ENCODE measurements at regions of chr6 and their contacts with region 1.

Region 1: GRCh38 chr6:150600301-150601017 is 774 bp downstream of the PLEKHG1 start:
- DNase-seq: peak; percentile 27
- H3K4me3 Mint-ChIP-seq: peak overlapping the region; percentile 83
- H3K27ac Mint-ChIP-seq: peak overlapping the region; percentile 73
- H3K4me1 Mint-ChIP-seq: peaks cover 17% of the 10 kb centered on the region
- H3K27me3 Mint-ChIP-seq: peaks cover 60% of the 10 kb centered on the region

Region 2: DNA sequence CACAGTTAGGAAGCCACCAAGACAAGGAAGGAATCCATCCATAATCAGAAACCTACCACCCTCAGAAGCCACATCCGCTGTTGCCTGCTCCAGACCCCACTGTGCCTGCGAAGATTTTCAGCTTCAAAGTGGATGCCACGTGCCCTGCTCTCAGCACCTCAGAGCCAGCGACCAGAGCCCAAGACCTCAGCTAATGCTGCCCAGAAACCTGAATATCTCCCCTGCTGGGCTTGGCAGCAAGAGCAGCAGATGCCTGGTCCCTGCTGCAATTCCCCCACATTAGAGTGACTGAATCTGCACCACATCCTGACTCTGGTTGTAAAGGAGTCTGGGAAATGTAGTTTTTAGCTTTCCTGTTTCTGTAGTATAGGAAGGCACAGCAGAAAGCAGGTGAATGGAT is 520.9 kb before region 1 on chr6:
- intact Hi-C with region 1: loop called (anchors 2 kb)
- DNase-seq: peak; percentile 12
- H3K4me3 Mint-ChIP-seq: peak overlapping the region; percentile 54
- H3K27ac Mint-ChIP-seq: no peak overlapping the region
- H3K4me1 Mint-ChIP-seq: peaks cover 22% of the 10 kb centered on the region
- H3K27me3 Mint-ChIP-seq: peaks cover 33% of the 10 kb centered on the region

Region 3: GRCh38 chr6:150243620-150244314 is 356.7 kb before region 1 on chr6:
- intact Hi-C with region 1: loop called (anchors 10 kb)
- DNase-seq: no peak
- H3K4me3 Mint-ChIP-seq: no peak overlapping the region
- H3K27ac Mint-ChIP-seq: no peak overlapping the region
- H3K4me1 Mint-ChIP-seq: peaks cover 15% of the 10 kb centered on the region
- H3K27me3 Mint-ChIP-seq: peaks cover 8% of the 10 kb centered on the region

Region 4: DNA sequence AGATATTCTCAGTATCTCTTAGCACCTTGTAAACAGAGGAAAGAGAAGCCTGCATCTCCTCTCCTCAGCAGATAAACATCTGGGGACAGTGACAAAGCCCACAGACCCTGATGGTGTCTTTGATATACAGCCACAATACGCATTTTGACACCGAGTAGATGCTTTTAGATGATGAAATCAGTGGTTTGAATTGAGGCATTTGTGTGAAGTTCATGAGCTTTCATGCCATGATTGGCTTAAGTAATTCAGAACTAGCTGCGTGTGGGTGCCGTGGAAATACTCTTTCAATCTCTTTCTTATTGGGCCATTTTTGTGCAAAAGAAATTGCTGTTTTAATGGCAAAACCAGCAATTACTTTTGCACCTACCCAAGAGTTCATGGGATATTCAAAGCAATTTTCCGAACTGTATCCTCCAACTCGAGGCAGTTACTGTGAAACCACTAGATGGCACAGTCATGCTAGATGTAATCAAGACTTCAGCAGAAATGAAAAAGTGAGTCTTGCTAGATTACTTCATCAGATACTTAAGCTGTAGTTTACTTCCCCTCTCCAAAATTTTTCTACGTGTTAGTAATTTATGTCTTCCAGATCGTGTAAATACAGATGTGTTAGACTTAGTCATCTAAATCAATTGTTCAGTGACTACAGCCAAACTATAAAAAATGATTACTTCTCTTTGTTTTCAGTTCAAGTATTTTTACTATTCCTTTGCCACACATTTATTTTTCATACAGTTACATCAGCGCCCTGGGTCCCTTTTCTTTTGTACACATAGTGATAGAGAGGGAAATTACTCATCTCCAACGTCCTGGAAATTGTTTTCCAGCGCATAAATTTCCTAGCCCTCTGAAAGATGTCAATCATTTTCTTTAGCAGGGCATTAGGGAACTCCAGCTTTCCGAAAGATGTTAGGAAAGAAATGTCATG is 182.3 kb before region 1 on chr6:
- intact Hi-C with region 1: loop called (anchors 1 kb)
- DNase-seq: peak; percentile 6
- H3K4me3 Mint-ChIP-seq: peak overlapping the region; percentile 73
- H3K27ac Mint-ChIP-seq: peak overlapping the region; percentile 45
- H3K4me1 Mint-ChIP-seq: peaks cover 23% of the 10 kb centered on the region
- H3K27me3 Mint-ChIP-seq: peaks cover 36% of the 10 kb centered on the region

Region 5: DNA sequence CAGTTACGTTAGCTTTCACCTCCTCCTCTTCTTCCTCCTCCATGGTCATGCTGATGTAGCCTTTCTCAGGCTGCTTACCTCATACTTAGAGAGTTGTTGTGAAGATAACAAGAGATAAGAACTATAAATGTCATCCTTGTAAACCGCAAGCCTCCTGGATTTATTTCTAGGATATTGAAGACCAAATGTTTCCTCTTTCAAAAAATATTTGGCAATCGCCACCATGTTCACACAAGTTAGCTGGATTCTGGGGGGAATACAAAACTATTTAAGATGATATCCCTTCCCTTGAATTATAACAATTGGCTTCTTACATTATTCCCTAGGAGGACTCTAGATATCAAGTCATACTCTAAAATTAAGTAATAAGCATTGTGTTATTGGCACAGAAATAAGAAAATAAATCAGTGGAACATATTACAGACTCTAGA is 100.6 kb before region 1 on chr6:
- intact Hi-C with region 1: loop called (anchors 5 kb)
- DNase-seq: no peak
- H3K4me3 Mint-ChIP-seq: no peak overlapping the region
- H3K27ac Mint-ChIP-seq: no peak overlapping the region
- H3K4me1 Mint-ChIP-seq: no peaks in the 10 kb centered on the region
- H3K27me3 Mint-ChIP-seq: peaks cover 4% of the 10 kb centered on the region

Region 6: DNA sequence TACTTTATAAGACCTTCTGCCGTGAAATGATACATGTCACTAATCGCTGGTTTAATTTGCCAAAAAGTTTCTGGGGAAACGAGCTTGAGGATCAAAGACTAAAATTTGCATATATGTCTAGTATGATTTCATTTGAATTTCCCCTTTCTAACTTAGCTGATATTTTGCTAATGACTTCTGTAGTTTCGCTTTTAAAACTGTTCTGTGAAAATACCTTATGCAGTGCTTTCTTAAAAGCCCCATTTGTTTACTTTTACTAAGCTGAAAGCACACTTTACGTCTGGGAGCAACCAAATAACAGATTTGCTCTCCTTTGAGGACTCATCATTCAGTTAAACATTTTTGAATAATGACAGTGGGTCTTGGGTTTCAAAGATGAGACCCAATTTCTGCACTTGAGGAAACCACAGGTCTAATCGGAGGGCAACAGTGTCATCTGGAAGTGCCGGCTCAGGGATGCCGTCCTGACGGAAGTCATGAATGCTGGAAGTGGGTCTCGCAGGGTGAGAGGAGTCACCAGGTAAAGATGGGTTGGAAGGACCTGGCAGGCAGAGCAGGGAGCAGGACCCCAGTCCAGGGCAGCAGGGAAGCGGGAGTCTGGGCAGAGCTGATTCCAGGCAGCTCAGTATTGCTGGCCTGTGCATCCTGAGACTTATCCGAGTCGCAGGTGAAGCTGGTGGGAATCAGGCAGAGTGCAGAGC is 32.5 kb after region 1 on chr6:
- intact Hi-C with region 1: no loop called
- DNase-seq: no peak
- H3K4me3 Mint-ChIP-seq: no peak overlapping the region
- H3K27ac Mint-ChIP-seq: no peak overlapping the region
- H3K4me1 Mint-ChIP-seq: peaks cover 24% of the 10 kb centered on the region
- H3K27me3 Mint-ChIP-seq: peaks cover 23% of the 10 kb centered on the region

Region 7: GRCh38 chr6:150865406-150866146 is 265.1 kb after region 1 on chr6 and contains the start of gene MTHFD1L:
- intact Hi-C with region 1: loop called (anchors 1 kb)
- DNase-seq: peak; percentile 74
- H3K4me3 Mint-ChIP-seq: peak within 1 kb of the TSS; percentile 86
- H3K27ac Mint-ChIP-seq: peak within 1 kb of the TSS; percentile 91
- H3K4me1 Mint-ChIP-seq: peaks cover 38% of the 10 kb centered on the region
- H3K27me3 Mint-ChIP-seq: peaks cover 2% of the 10 kb centered on the region
- total RNA-seq, gene MTHFD1L: 121 and 125 TPM in 2 replicates

Measured in activated T-helper 1 cell treated with anti-CD3 and anti-CD28 coated beads, Interleukin-12 subunit alpha, Interleukin-12 subunit beta, Interleukin-2, Interleukin-4 antibody, amounts not matched to agents 30 ng/mL and 10 ng/mL and 1 ng/mL, durations not matched to agents 14 hours and 24 hours and 36 hours (primary cell).